ENCODE measurements at regions of chr20 and their contacts with region 1.

Region 1: GRCh38 chr20:45771182-45771759 is 20.4 kb downstream of the WFDC3 start:
- DNase-seq: peak; percentile 86
- ATAC-seq: peak; percentile 73
- H3K4me3 ChIP-seq: no peak overlapping the region
- H3K4me3 Mint-ChIP-seq: no peak overlapping the region
- H3K27ac ChIP-seq: no peak overlapping the region
- H3K27ac Mint-ChIP-seq: no peak overlapping the region
- H3K4me1 ChIP-seq: peaks cover 0 to 6% of the 10 kb centered on the region in 2 donors
- H3K4me1 Mint-ChIP-seq: peaks cover 5% of the 10 kb centered on the region
- H3K27me3 ChIP-seq: peaks cover 0 to 6% (median 1%) of the 10 kb centered on the region in 4 experiments
- H3K27me3 Mint-ChIP-seq: peaks cover 18% of the 10 kb centered on the region
- CTCF ChIP-seq: peak; percentile 95

Region 2: GRCh38 chr20:45095753-45096371 is 675.4 kb before region 1 on chr20:
- CTCF ChIA-PET with region 1: interaction called, 14 read pairs
- POLR2A ChIA-PET with region 1: no interaction called
- intact Hi-C with region 1: loop called (anchors 1 kb)
- DNase-seq: peak; percentile 78
- ATAC-seq: peak; percentile 56
- H3K4me3 ChIP-seq: no peak overlapping the region
- H3K4me3 Mint-ChIP-seq: peak overlapping the region; percentile 19
- H3K27ac ChIP-seq: no peak overlapping the region
- H3K27ac Mint-ChIP-seq: no peak overlapping the region
- H3K4me1 ChIP-seq: peaks cover 21% of the 10 kb centered on the region in 2 donors
- H3K4me1 Mint-ChIP-seq: peaks cover 15% of the 10 kb centered on the region
- H3K27me3 ChIP-seq: peaks cover 0 to 44% (median 26%) of the 10 kb centered on the region in 4 experiments
- H3K27me3 Mint-ChIP-seq: peaks cover 31% of the 10 kb centered on the region
- CTCF ChIP-seq: peak; percentile 85

Region 3: GRCh38 chr20:45306431-45306982 is 464.8 kb before region 1 on chr20 and contains the start of gene RBPJL:
- CTCF ChIA-PET with region 1: interaction called, 13 read pairs
- POLR2A ChIA-PET with region 1: no interaction called
- intact Hi-C with region 1: loop called (anchors 1 kb)
- DNase-seq: peak; percentile 58
- ATAC-seq: peak; percentile 17
- H3K4me3 ChIP-seq: no peak within 1 kb of the TSS
- H3K4me3 Mint-ChIP-seq: no peak within 1 kb of the TSS
- H3K27ac ChIP-seq: no peak within 1 kb of the TSS
- H3K27ac Mint-ChIP-seq: peak within 1 kb of the TSS; percentile 53
- H3K4me1 ChIP-seq: peaks cover 5 to 6% of the 10 kb centered on the region in 2 donors
- H3K4me1 Mint-ChIP-seq: peaks cover 5% of the 10 kb centered on the region
- H3K27me3 ChIP-seq: peaks cover 0 to 53% (median 5%) of the 10 kb centered on the region in 4 experiments
- H3K27me3 Mint-ChIP-seq: peaks cover 62% of the 10 kb centered on the region
- CTCF ChIP-seq: peak; percentile 88
- total RNA-seq, gene RBPJL: not detected in 2 replicates

Region 4: DNA sequence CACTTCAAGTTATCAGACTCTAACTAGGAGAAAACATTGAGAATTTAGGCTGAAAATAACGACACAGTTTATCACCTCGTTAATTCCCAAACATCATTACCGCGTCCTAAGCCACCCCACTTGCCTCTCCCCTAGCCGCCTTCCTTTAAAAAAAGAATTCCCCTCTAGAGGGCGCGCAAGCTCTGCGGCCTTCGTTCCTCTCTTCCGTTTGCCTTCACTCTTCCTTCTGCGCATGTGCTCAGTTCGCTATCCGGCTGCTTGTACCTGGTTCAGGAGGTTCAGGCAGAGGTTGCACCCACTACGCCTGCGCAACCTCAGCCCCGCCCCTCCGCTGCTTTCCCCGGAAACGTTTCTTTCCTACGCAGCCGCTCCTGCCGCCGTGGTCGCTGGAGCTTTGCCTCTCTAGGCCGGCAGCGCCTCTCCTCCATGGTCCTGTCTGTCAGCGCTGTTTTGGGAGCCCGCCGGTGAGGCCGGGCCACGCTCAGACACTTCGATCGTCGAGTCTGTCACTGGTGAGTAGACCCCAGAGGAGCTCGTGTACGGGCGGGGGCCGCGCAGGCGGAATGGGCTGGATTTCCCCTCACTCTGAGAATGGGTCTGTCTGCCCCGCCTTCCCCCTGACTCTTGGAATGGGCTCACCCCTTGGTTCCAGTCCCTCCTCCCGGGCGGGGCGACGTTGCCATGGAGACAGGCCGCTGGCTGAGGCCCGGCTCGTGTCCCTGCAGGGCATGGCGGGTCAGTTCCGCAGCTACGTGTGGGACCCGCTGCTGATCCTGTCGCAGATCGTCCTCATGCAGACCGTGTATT is 408.3 kb before region 1 on chr20 and contains the start of gene SYS1:
- CTCF ChIA-PET with region 1: interaction called, 56 read pairs
- POLR2A ChIA-PET with region 1: interaction called, 3 read pairs
- intact Hi-C with region 1: loop called (anchors 1 kb)
- DNase-seq: peak; percentile 99
- ATAC-seq: peak; percentile 82
- H3K4me3 ChIP-seq: peak within 1 kb of the TSS; percentile 79 to 88 (median 85)
- H3K4me3 Mint-ChIP-seq: peak within 1 kb of the TSS; percentile 99
- H3K27ac ChIP-seq: peak within 1 kb of the TSS; percentile 86 to 99
- H3K27ac Mint-ChIP-seq: peak within 1 kb of the TSS; percentile 99
- H3K4me1 ChIP-seq: peaks cover 47 to 49% of the 10 kb centered on the region in 2 donors
- H3K4me1 Mint-ChIP-seq: peaks cover 49% of the 10 kb centered on the region
- H3K27me3 ChIP-seq: peaks cover 0 to 5% (median 0%) of the 10 kb centered on the region in 4 experiments
- H3K27me3 Mint-ChIP-seq: no peaks in the 10 kb centered on the region
- CTCF ChIP-seq: peak; percentile 86
- total RNA-seq, gene SYS1: 57.7 and 61.4 TPM in 2 replicates

Region 5: GRCh38 chr20:45436732-45437391 is 334.4 kb before region 1 on chr20:
- CTCF ChIA-PET with region 1: interaction called, 19 read pairs
- POLR2A ChIA-PET with region 1: no interaction called
- intact Hi-C with region 1: no loop called
- DNase-seq: peak; percentile 89
- ATAC-seq: peak; percentile 93
- H3K4me3 ChIP-seq: peak overlapping the region; percentile 32 to 81 (median 57)
- H3K4me3 Mint-ChIP-seq: peak overlapping the region; percentile 90
- H3K27ac ChIP-seq: peak overlapping the region in 1 of 2 donors; percentile 53
- H3K27ac Mint-ChIP-seq: peak overlapping the region; percentile 86
- H3K4me1 ChIP-seq: peaks cover 30 to 33% of the 10 kb centered on the region in 2 donors
- H3K4me1 Mint-ChIP-seq: peaks cover 32% of the 10 kb centered on the region
- H3K27me3 ChIP-seq: no peaks in the 10 kb centered on the region
- H3K27me3 Mint-ChIP-seq: no peaks in the 10 kb centered on the region
- CTCF ChIP-seq: peak; percentile 93

Region 6: GRCh38 chr20:45592574-45593189 is 178.6 kb before region 1 on chr20:
- CTCF ChIA-PET with region 1: interaction called, 35 read pairs
- POLR2A ChIA-PET with region 1: no interaction called
- intact Hi-C with region 1: no loop called
- DNase-seq: peak; percentile 62
- ATAC-seq: peak; percentile 24
- H3K4me3 ChIP-seq: no peak overlapping the region
- H3K4me3 Mint-ChIP-seq: no peak overlapping the region
- H3K27ac ChIP-seq: no peak overlapping the region
- H3K27ac Mint-ChIP-seq: no peak overlapping the region
- H3K4me1 ChIP-seq: no peaks in the 10 kb centered on the region
- H3K4me1 Mint-ChIP-seq: no peaks in the 10 kb centered on the region
- H3K27me3 ChIP-seq: peaks cover 0 to 8% (median 2%) of the 10 kb centered on the region in 4 experiments
- H3K27me3 Mint-ChIP-seq: peaks cover 33% of the 10 kb centered on the region
- CTCF ChIP-seq: peak; percentile 75

Measured in B cell (primary cell).